ENCODE measurements at regions of chr4 and their contacts with region 1.

Region 1: GRCh38 chr4:158970812-158971211 is 132.1 kb upstream of the RAPGEF2 start:
- DNase-seq: no peak

Region 2: DNA sequence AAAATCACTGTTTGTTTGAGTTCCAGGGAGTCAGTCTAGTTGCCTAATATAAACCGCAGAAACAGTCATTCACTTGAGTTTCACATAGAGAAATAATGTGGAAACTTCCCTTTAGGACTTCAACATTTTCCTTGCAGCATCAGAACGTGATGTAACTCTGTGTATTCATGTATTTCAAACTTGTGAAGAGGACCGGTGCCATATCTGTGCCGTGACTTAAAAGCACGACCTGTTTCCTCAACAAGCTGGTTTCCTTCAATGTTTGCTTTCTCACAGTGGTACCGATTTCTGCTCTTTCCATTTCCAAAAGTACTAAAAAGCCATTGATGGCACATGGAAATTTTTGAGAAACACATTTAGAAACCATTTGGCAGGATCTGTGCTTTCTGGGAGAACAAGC is 34.6 kb before region 1 on chr4:
- intact Hi-C with region 1: loop called in 1 of 2 experiments (anchors 2 kb)
- DNase-seq: no peak

Region 3: DNA sequence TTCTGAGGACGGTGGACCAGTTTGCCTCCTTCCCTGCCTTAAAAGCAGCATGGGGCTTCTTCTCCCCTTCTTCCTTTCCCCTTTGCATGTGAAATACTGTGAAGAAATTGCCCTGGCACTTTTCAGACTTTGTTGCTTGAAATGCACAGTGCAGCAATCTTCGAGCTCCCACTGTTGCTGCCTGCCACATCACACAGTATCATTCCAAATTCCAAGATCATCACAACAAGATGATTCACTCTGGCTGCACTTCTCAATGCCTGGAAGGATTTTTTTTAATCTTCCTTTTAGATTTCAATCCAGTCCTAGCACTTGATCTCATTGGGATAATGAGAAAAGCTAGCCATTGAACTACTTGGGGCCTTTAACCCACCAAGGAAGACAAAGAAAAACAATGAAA is 387.4 kb after region 1 on chr4:
- intact Hi-C with region 1: no loop called
- DNase-seq: no peak